Dendritic cell treated with granulocyte-macrophage colony-stimulating factor and Interleukin-4, amounts not matched to agents 40 ng/mL and 50 ng/mL, for 4 days (primary cell): ENCODE measurements at regions of chr12 and their contacts with region 1.

Region 1: GRCh38 chr12:96501139-96501761 is 11.9 kb downstream of the CFAP54 start:
- H3K4me3 Mint-ChIP-seq: no peak overlapping the region
- H3K27ac Mint-ChIP-seq: peak overlapping the region; percentile 24
- H3K4me1 Mint-ChIP-seq: peaks cover 23% of the 10 kb centered on the region
- H3K27me3 Mint-ChIP-seq: peaks cover 5% of the 10 kb centered on the region

Region 2: DNA sequence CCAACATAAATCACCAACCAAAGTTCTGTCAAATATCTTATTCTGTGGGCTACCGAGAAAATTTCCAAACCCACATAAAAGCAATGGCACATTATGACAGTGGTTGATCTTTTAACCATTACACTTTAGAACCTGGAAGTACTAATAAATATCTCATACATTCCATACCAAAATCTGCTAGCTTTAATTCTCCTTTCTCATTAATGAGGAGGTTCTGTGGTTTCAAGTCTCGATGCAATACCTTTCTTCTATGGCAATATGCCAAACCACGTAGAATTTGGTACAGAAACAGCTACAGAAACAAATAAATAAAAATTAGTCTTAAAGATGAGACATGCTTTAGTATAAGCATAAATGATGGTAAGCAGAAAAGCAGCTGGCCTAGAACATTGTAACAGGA is 206.4 kb before region 1 on chr12:
- intact Hi-C with region 1: loop called (anchors 10 kb)
- H3K4me3 Mint-ChIP-seq: no peak overlapping the region
- H3K27ac Mint-ChIP-seq: no peak overlapping the region
- H3K4me1 Mint-ChIP-seq: no peaks in the 10 kb centered on the region
- H3K27me3 Mint-ChIP-seq: no peaks in the 10 kb centered on the region

Region 3: DNA sequence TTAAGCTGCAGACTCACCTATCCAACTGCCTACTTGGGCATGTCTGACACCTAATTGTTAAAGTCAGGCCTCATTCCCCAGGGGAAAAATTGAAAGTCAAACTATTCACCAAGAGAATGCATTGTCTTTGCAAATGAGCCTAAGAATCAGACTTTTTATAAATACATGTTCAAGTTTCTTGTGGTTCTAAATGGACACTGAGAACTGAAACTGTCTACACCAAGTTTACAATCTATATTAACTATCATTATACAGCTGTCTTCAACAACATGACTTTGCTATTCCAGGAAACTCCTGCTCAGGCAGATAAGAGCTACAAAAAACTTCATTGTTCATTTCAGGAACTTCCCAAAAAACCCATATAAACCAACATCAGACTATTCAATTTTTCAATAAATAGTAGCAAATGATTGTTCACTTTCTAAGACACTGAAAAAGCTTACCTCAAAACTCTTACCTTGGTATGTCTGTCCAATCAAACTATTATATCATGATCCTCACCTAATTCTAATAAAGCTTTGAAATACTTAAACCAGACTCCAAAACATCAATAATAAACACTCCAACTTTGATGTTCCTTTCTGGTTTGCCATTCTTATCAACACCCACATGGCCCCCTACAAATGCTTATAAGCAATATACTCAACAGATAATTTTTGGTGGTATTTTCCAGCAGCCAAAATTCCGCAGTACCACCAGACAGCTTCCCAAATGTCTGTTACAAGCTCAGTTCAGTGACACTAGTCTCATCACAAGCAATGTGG is 125.2 kb before region 1 on chr12:
- intact Hi-C with region 1: no loop called
- H3K4me3 Mint-ChIP-seq: peak overlapping the region; percentile 26
- H3K27ac Mint-ChIP-seq: peak overlapping the region; percentile 43
- H3K4me1 Mint-ChIP-seq: peaks cover 47% of the 10 kb centered on the region
- H3K27me3 Mint-ChIP-seq: no peaks in the 10 kb centered on the region